ENCODE measurements at regions of chr1 and their contacts with region 1.

Region 1: DNA sequence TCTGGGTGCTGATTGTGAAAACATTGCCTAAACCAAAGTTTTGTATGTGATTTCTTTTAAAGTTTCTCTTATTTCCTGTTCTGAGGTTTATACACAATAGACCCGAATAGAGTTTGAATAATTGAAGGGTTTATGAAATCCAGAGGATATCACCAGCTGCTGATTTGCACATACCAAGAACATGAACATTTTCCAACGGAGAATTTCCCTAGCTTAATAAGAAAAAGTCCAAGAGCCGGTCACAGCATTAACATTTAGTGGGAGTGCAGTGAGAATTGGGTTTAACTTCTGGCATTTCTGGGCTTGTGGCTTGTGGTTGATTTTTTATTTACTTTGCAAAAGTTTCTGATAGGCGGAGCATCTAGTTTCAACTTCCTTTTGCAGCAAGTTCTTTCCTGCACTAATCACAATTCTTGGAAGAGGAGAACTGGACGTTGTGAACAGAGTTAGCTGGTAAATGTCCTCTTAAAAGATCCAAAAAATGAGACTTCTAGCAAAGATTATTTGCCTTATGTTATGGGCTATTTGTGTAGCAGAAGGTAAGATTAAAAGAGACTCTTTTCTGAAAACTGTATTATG is at the start of gene CFH:
- DNase-seq: peak; percentile 91
- ATAC-seq: peak; percentile 93
- H3K4me3 ChIP-seq: peak within 1 kb of the TSS; percentile 39
- H3K27ac ChIP-seq: peak within 1 kb of the TSS; percentile 52; the same call in 1 of the 2 replicates
- H3K4me1 ChIP-seq: 0 out of 2 replicates have a peak, but pooled peaks cover 2% of the 10 kb centered on the region
- H3K27me3 ChIP-seq: no peaks in the 10 kb centered on the region
- CTCF ChIP-seq: no peak
- POLR2A ChIP-seq: no peak
- RAD21 ChIP-seq: no peak
- total RNA-seq, gene CFH: 6.3 and 12.8 TPM in 2 replicates

Region 2: GRCh38 chr1:196148367-196148970 is 503.3 kb before region 1 on chr1:
- CTCF ChIA-PET with region 1: no interaction called
- POLR2A ChIA-PET with region 1: no interaction called
- dilution Hi-C with region 1: no loop called
- in situ Hi-C with region 1: no loop called
- intact Hi-C with region 1: loop called (anchors 5 kb)
- DNase-seq: peak; percentile 57
- ATAC-seq: peak; percentile 77
- H3K4me3 ChIP-seq: no peak overlapping the region
- H3K27ac ChIP-seq: no peak overlapping the region
- H3K4me1 ChIP-seq: no peaks in the 10 kb centered on the region
- H3K27me3 ChIP-seq: no peaks in the 10 kb centered on the region
- CTCF ChIP-seq: peak; percentile 68
- POLR2A ChIP-seq: no peak
- RAD21 ChIP-seq: peak; percentile 77

Region 3: DNA sequence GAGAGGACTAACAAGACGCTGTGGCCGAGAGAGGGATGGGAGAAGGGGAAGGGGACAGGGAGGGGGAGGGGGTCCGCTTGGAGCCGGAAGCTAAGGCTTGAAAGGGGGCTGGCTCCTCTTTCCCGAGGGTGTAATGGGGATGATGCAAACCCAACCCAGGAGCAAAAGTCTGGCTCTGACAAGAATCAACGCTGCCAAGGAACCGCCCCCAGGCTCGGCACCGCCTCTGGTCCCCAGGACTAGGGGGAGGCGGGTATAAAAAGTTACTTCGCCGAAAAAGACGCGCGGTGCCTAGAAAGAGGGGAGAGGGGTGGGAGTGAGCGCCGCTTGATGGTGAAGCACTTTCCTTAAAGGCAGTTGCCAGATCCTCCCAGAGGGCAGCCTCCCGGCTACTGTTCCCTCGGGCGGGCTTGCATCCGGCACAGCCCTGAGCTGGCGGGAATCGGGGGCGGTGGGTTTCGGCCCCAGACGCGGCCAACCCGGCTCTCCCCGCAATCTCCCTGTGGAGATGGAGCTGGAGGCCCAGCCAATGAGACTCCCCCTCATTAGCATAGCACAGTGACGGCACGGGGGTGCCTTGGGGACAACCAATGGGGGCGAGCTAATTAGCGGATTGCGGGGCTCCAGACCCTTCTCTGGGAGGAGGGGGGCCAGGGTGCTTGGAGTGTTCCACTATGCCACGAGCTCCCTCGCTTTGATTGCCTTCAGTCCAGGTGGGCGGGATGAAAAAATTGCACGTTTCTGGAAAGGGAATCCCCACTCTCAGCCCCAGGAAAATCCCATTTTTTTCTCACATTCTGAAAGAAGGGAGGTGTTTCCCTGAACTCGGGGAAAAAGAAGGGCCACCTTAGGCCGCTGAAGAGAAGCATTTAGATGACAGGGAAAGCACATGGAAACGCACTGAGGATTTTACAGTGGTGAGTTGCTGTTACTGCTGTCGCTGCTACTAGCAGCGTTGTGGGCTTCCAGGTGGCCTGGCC is 43.0 kb before region 1 on chr1 and contains the start of gene KCNT2:
- CTCF ChIA-PET with region 1: interaction called, 3 read pairs
- POLR2A ChIA-PET with region 1: no interaction called
- dilution Hi-C with region 1: no loop called
- in situ Hi-C with region 1: no loop called
- intact Hi-C with region 1: loop called (anchors 5 kb)
- DNase-seq: peak; percentile 29
- ATAC-seq: peak; percentile 92
- H3K4me3 ChIP-seq: peak within 1 kb of the TSS; percentile 53
- H3K27ac ChIP-seq: peak within 1 kb of the TSS; percentile 31; the same call in 1 of the 2 replicates
- H3K4me1 ChIP-seq: no peaks in the 10 kb centered on the region
- H3K27me3 ChIP-seq: no peaks in the 10 kb centered on the region
- CTCF ChIP-seq: no peak
- POLR2A ChIP-seq: no peak
- RAD21 ChIP-seq: no peak
- total RNA-seq, gene KCNT2: 0.56 and 0.72 TPM in 2 replicates